Activated T-helper 1 cell treated with anti-CD3 and anti-CD28 coated beads, Interleukin-12 subunit alpha, Interleukin-12 subunit beta, Interleukin-2, Interleukin-4 antibody, amounts not matched to agents 30 ng/mL and 10 ng/mL and 1 ng/mL, durations not matched to agents 14 hours and 24 hours and 36 hours (primary cell): ENCODE measurements at regions of chr16 and their contacts with region 1.

Region 1: DNA sequence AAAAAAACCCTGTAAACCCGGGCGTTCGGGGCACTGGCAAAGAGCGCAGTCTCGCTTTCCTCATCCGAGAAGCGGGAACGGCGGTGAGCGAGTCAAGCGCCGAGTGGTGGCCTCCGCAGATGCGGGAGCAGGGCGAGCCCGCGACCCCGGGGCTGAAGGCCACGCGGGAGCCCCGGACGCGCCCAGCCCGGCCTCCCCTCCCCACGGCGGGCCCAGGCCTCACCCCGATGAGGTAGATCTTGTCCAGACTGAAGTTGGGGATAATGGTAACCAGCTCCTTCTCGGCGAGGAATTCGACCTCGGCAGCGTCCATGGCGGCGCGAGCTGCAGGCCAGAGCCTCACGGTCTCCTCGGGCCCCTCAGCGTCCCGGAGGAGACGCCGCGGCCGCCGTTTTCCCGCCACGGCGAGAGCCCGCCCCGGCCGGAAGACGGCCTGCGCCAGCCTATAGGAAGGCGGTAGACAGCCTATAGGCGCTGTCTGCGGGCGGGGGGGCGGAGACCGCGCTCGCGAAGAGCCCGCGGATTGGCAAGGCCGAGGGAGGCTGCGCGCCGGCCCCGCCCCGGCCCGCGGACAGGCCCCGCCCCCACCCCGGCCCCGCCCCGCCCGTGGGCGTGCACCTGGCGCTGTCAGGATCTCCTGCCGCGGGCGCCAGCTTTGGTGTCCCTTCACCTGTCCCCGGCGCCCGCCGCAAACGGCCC is at the start of gene GINS2:
- DNase-seq: peak; percentile 89
- H3K4me3 Mint-ChIP-seq: peak within 1 kb of the TSS; percentile 86
- H3K27ac Mint-ChIP-seq: peak within 1 kb of the TSS; percentile 86
- H3K4me1 Mint-ChIP-seq: peaks cover 8% of the 10 kb centered on the region
- H3K27me3 Mint-ChIP-seq: peaks cover 7% of the 10 kb centered on the region
- total RNA-seq, gene GINS2: 87.2 and 91.1 TPM in 2 replicates

Region 2: GRCh38 chr16:85799497-85800337 is 111.0 kb after region 1 on chr16 and contains the starts of genes COX4I1 and EMC8:
- intact Hi-C with region 1: loop called (anchors 1 kb)
- DNase-seq: peak; percentile 93
- H3K4me3 Mint-ChIP-seq: peak within 1 kb of the TSS; percentile 92
- H3K27ac Mint-ChIP-seq: peak within 1 kb of the TSS; percentile 96
- H3K4me1 Mint-ChIP-seq: peaks cover 57% of the 10 kb centered on the region
- H3K27me3 Mint-ChIP-seq: no peaks in the 10 kb centered on the region
- total RNA-seq, gene COX4I1: 544 and 558 TPM in 2 replicates
- total RNA-seq, gene EMC8: 49.5 and 51.1 TPM in 2 replicates